ENCODE measurements at regions of chr6 and their contacts with region 1.

Region 1: DNA sequence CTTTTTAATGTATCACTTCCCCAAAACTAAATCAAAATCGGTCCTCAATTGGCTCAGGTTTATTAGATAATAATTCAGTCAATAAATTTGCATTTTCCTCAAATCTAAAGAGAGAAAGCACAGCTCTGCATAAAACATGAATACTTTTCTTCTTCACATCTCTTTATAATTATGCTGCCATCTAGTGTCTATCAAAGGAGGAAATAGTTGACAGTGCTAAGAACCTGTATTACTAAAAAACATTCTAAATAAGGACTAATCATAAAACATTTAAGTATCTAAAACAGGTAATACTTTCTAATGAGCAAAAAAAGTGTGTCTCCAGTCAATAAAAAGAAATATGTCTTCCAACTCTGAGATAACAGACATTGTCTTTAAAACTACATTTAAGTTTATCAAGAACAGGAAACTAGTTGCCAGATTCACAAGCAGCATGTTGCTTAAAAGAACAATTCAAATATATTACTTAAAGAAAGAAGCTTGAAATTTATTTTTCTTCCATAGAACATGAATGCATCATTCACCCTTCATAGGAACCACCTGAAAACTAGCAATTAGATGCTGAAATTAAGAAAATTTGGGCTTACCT is 56.5 kb upstream of the DST start:
- DNase-seq: no peak
- H3K4me3 ChIP-seq: no peak overlapping the region
- H3K27ac ChIP-seq: no peak overlapping the region
- H3K27me3 ChIP-seq: no peaks in the 10 kb centered on the region
- CTCF ChIP-seq: peak; percentile 52

Region 2: GRCh38 chr6:56683882-56684281 is 15.3 kb before region 1 on chr6:
- CTCF ChIA-PET with region 1: interaction called, 10 read pairs
- POLR2A ChIA-PET with region 1: no interaction called
- DNase-seq: peak; percentile 61
- H3K4me3 ChIP-seq: no peak overlapping the region
- H3K27ac ChIP-seq: no peak overlapping the region
- H3K27me3 ChIP-seq: no peaks in the 10 kb centered on the region
- CTCF ChIP-seq: no peak

Region 3: DNA sequence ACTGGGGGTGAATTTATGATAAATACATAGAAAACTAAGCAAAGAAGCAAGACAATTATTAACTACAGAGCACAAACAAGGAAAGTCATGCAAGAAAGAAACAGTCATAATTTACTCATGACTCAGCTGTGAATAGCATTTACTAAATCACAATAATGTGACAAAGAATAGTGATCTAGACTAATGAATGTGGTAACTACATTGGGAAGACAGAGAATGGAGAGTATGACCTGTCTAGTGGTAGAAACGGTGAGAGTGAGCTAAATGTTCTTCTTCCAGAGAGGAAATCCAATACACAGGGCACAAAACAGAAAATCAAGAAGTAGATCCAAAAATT is 97.0 kb after region 1 on chr6:
- CTCF ChIA-PET with region 1: no interaction called
- POLR2A ChIA-PET with region 1: no interaction called
- DNase-seq: no peak
- H3K4me3 ChIP-seq: no peak overlapping the region
- H3K27ac ChIP-seq: no peak overlapping the region
- H3K27me3 ChIP-seq: no peaks in the 10 kb centered on the region
- CTCF ChIP-seq: no peak